Transverse colon (tissue), 4 donors: ENCODE measurements at regions of chr1 and their contacts with region 1.

Region 1: DNA sequence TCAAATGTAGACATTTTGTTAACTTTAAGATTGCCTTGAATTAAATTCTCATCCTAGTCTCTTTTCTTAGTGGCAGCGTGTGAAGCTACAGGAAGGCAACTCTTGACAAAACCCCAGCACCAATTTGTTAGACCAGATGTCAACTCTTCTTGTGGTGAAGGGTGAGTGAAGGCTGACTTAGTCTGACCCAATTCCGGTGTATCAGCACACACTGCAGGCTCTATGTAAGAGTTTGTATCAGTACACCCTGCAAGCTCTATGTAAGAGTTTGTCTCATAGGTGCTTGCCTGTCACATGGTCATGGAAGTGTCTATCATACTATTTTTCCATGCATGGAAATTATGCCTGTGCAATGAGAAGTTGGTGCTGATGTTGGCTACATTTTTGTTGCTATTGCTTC is 16.8 kb downstream of the CR2 start:
- DNase-seq: no peak
- H3K4me3 ChIP-seq: no peak overlapping the region
- H3K27ac ChIP-seq: no peak overlapping the region
- H3K4me1 ChIP-seq: no peaks in the 10 kb centered on the region
- H3K27me3 ChIP-seq: peaks cover 19% of the 10 kb centered on the region
- CTCF ChIP-seq: no peak
- EP300 ChIP-seq: no peak
- POLR2A ChIP-seq: no peak

Region 2: DNA sequence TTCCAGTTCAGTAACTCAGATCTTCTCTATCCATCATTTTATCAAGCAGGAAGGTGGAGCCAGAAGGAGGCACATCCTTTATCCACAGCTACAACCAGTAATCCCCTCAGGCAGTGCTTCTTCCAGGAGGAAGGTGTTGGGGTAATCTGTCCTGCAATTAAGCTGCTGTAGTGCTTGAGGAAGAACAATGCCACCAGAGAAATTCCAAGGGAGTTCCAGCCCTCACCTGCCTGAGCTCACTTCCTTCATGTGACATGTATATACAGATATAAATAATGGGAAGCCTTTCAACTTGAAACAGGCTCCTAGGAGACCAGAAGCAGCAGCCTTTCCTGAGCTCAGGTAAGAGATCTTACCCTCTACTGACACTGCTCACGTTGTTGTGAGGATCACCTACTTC is 607.7 kb before region 1 on chr1:
- in situ Hi-C with region 1: no loop called
- intact Hi-C with region 1: loop called (anchors 5 kb)
- DNase-seq: no peak
- H3K4me3 ChIP-seq: no peak overlapping the region
- H3K27ac ChIP-seq: no peak overlapping the region
- H3K4me1 ChIP-seq: no peaks in the 10 kb centered on the region
- H3K27me3 ChIP-seq: peaks cover 5% of the 10 kb centered on the region
- CTCF ChIP-seq: no peak
- EP300 ChIP-seq: no peak
- POLR2A ChIP-seq: no peak

Region 3: DNA sequence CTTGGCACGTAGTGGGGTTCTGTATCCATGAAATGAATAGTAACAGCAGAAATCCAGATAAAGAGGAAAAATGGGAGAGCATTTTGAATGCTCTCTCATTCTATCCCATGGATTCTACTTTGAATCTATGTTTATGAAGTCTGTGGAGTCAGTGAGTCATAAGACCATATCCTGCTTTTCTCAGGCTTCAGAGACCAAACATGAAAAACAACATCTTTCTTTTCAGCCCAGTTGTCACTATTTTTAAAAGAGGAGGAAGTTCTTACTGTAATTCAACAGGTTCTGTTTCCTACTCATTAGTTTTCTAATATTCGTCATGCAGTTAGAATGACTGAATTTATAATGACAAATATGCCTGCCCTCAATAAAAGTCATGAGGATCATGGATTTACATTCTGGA is 188.9 kb before region 1 on chr1:
- in situ Hi-C with region 1: no loop called
- intact Hi-C with region 1: no loop called
- DNase-seq: no peak
- H3K4me3 ChIP-seq: no peak overlapping the region
- H3K27ac ChIP-seq: peak overlapping the region; percentile 67 to 82 (median 77)
- H3K4me1 ChIP-seq: peaks cover 13 to 50% (median 33%) of the 10 kb centered on the region in 4 donors
- H3K27me3 ChIP-seq: no peaks in the 10 kb centered on the region
- CTCF ChIP-seq: no peak
- EP300 ChIP-seq: no peak
- POLR2A ChIP-seq: no peak